Lower leg skin (tissue), 4 donors: ENCODE measurements at regions of chr11 and their contacts with region 1.

Region 1: DNA sequence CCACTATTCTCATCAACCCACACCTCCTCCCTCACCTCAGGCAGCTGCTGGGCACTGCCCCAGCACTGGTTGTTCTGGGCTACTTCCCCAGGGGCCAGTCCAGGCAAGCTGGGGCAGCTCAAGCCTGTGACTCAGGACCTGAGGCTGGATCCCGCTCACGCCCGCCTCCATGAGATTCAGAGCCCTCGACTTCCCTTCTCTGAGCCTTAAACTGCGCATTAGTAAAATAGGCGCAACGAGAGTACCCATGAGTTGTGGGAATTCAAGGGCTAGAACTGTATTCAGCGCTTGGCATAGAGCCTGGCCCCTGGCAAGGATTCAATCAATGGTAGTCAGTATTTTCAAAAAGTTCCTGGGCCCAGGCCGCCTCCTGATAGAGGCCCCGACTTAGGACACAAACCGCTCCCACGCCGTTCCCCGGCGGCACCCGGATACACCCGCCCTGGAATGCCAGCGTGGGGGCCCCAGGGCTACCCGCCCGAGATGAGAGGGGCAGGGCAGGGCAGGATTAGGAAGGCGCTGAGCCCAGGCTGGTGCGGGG is 723 bp upstream of the CD82 start:
- DNase-seq: peak; percentile 87 to 96
- H3K4me3 ChIP-seq: no peak overlapping the region
- CTCF ChIP-seq: no peak
- POLR2A ChIP-seq: no peak

Region 2: GRCh38 chr11:44609001-44609782 is 44.5 kb after region 1 on chr11:
- intact Hi-C with region 1: loop called (anchors 5 kb)
- DNase-seq: no peak
- H3K4me3 ChIP-seq: no peak overlapping the region
- CTCF ChIP-seq: no peak
- POLR2A ChIP-seq: no peak

Region 3: GRCh38 chr11:44680982-44681597 is 116.3 kb after region 1 on chr11:
- intact Hi-C with region 1: no loop called
- DNase-seq: no peak
- H3K4me3 ChIP-seq: no peak overlapping the region
- CTCF ChIP-seq: no peak
- POLR2A ChIP-seq: no peak